ENCODE measurements at regions of chr3 and their contacts with region 1.

Region 1: GRCh38 chr3:107598926-107599771 is 76.4 kb downstream of the BBX start:
- DNase-seq: peak; percentile 68
- H3K4me3 ChIP-seq: peak overlapping the region; percentile 65
- H3K27ac ChIP-seq: peak overlapping the region; percentile 49
- H3K4me1 ChIP-seq: peaks cover 43% of the 10 kb centered on the region
- CTCF ChIP-seq: no peak

Region 2: DNA sequence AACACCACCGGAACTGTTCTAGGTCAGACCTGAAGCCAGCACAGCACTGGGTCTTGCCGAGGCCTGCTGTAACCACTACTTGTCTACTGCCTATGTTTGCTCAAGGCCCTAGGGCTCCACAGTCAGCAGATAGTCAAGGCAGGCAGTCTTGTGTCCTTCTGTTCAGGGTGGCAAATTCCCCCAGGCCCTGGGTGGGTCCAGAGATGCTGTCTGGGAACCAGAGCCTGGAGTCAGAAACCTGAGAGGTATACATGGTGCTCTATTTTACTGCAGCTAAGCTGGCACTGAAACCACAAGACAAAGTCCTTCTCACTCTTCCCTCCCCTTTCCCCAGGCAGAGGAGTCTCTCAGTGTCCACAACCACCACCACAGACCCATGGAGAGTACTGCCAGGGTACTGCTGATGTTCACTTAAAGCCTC is 13.5 kb after region 1 on chr3:
- CTCF ChIA-PET with region 1: no interaction called
- POLR2A ChIA-PET with region 1: interaction called, 11 read pairs
- intact Hi-C with region 1: no loop called
- DNase-seq: no peak
- H3K4me3 ChIP-seq: no peak overlapping the region
- H3K27ac ChIP-seq: no peak overlapping the region
- H3K4me1 ChIP-seq: no peaks in the 10 kb centered on the region
- CTCF ChIP-seq: no peak

Region 3: DNA sequence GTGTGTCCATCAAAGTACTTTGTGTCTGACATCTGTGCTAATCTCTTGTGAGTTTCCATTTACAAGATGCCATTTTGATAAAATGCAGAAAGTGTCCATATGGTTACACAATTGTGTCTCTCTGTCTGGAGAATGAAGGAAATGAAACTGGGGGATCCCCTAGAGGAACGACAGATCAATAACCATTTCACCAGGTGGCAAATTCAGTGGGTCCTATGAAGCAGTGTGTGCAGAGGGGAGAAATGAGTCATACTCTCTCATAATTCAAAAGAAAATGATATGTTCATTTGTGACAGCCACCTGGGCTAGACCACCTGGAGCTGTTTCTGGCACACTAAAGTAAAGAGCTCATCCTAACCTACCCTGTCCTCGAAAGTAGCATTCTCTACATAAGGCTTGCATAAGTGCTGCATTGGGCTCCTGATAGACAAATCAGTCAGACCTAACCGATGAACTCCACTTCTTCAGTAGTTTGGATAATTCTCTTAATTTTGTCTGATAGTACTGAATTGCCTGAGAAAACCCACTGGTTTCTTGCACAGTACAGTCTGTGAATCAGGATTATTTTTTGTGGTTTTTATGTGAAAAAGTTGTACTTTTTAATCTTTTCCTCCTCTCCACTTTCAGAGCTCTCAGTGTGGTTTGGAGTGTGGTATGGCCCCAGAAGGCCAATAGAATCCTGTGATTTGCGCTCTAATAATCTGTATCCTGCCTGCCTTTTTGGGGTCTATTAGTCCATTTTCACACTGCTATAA is 501.9 kb after region 1 on chr3:
- CTCF ChIA-PET with region 1: no interaction called
- POLR2A ChIA-PET with region 1: no interaction called
- intact Hi-C with region 1: no loop called
- DNase-seq: peak; percentile 90
- H3K4me3 ChIP-seq: peak overlapping the region; percentile 1
- H3K27ac ChIP-seq: peak overlapping the region; percentile 70
- H3K4me1 ChIP-seq: peaks cover 39% of the 10 kb centered on the region
- CTCF ChIP-seq: no peak